Left cardiac atrium (tissue), 4 donors: ENCODE measurements at regions of chr9 and their contacts with region 1.

Region 1: DNA sequence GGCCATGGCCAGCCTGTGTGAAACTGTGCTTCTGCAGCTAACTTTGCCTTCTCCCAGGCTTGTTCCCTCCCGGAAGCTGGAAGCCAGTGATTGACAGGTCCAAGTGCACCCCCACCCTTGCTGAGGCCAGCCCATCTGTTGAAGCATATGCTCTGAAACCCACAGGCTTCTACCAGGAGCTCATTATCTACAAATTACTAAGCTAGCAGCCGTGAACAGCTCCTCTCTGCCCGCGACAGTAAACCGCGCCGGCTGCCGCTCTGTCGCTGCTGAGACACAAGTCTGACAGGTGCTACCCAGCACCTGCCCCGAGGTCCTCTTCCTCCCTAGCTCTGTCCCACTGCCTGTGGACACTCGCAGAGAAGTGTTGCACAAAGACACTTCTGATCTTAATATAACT is 490.9 kb downstream of the GADD45G start:
- DNase-seq: no peak
- ATAC-seq: peak in 1 of 2 donors; percentile 19

Region 2: GRCh38 chr9:89999534-90000370 is 95.9 kb before region 1 on chr9:
- intact Hi-C with region 1: loop called (anchors 2 to 10 kb)
- DNase-seq: peak; percentile 71
- ATAC-seq: peak; percentile 86 to 88

Region 3: DNA sequence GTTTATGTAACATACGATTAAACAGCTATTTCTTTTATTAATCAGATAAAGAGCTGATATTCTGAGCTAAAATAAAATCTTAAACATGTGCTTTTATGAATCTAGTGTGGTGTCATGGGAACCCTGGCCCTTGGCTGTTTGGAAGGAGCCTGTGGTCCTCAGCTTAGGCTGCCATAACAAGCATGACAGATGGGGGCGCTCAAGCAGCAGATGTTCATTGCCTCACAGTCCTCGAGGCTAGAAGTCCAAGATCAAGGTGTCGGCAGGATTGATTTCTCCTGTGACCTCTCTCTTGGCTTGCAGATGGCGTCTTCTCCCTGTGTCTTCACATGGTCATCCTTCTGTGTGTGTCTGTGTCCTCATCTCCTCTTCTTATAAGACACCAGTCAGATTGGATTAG is 42.7 kb before region 1 on chr9:
- intact Hi-C with region 1: no loop called
- DNase-seq: no peak
- ATAC-seq: no peak

Region 4: GRCh38 chr9:90156315-90156714 is 60.6 kb after region 1 on chr9:
- intact Hi-C with region 1: no loop called
- DNase-seq: no peak
- ATAC-seq: no peak